ENCODE measurements at regions of chr6 and their contacts with region 1.

Region 1: DNA sequence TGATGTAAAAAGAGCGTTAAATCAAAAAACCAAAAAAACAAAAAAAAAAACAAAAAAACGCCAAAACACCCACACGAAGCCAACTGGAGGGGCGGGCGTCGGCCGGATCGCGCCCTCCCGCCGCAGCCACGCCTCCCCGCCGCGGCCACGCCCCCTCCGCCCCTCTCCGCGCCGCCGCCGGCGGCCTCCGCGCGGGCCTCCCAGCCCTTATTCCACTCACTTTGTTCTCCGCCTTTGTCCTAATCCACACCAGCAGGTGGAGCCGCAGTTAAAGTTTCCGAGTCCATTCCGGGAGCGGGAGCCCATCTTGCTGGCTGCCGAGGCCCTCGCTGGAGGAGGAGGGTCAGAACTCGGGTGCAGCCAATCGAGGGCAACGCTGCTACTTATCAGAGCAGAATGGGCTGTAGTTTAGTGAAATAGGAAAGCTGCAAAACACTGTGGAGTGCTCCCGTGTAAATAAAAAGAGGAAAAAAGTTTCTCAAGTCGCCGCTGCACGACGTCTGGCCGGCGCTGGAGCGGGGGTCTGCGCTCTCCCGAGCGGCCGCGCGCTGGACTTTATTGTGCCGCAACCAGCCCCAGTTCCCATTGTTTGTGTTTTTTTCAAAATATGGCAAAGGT is at the start of gene ASF1A:
- DNase-seq: peak; percentile 92 to 99 (median 95)
- ATAC-seq: peak; percentile 76
- H3K4me3 ChIP-seq: peak within 1 kb of the TSS; percentile 94
- H3K4me3 Mint-ChIP-seq: peak within 1 kb of the TSS; percentile 99
- H3K27ac ChIP-seq: peak within 1 kb of the TSS; percentile 91 to 93
- H3K27ac Mint-ChIP-seq: peak within 1 kb of the TSS; percentile 98
- H3K4me1 ChIP-seq: peaks cover 36% of the 10 kb centered on the region
- H3K4me1 Mint-ChIP-seq: peaks cover 80% of the 10 kb centered on the region
- H3K27me3 ChIP-seq: no peaks in the 10 kb centered on the region
- H3K27me3 Mint-ChIP-seq: no peaks in the 10 kb centered on the region
- CTCF ChIP-seq: peak; percentile 17
- total RNA-seq, gene ASF1A: 10.7 to 11.9 TPM

Region 2: GRCh38 chr6:118283766-118284165 is 610.1 kb before region 1 on chr6:
- CTCF ChIA-PET with region 1: no interaction called
- POLR2A ChIA-PET with region 1: no interaction called
- intact Hi-C with region 1: loop called in 1 of 2 experiments (anchors 5 kb)
- DNase-seq: peak in 13 of 14 experiments; percentile 9 to 74 (median 38)
- ATAC-seq: peak; percentile 59
- H3K4me3 ChIP-seq: no peak overlapping the region
- H3K4me3 Mint-ChIP-seq: no peak overlapping the region
- H3K27ac ChIP-seq: no peak overlapping the region
- H3K27ac Mint-ChIP-seq: no peak overlapping the region
- H3K4me1 ChIP-seq: no peaks in the 10 kb centered on the region
- H3K4me1 Mint-ChIP-seq: no peaks in the 10 kb centered on the region
- H3K27me3 ChIP-seq: no peaks in the 10 kb centered on the region
- H3K27me3 Mint-ChIP-seq: peaks cover 11% of the 10 kb centered on the region
- CTCF ChIP-seq: peak; percentile 67

Region 3: GRCh38 chr6:118651282-118652050 is 242.4 kb before region 1 on chr6 and contains the start of gene CEP85L:
- CTCF ChIA-PET with region 1: no interaction called
- POLR2A ChIA-PET with region 1: interaction called, 4 read pairs
- intact Hi-C with region 1: loop called (anchors 5 to 10 kb)
- DNase-seq: peak; percentile 83 to 96 (median 90)
- ATAC-seq: peak; percentile 90
- H3K4me3 ChIP-seq: peak within 1 kb of the TSS; percentile 82
- H3K4me3 Mint-ChIP-seq: peak within 1 kb of the TSS; percentile 91
- H3K27ac ChIP-seq: peak within 1 kb of the TSS; percentile 78 to 87
- H3K27ac Mint-ChIP-seq: peak within 1 kb of the TSS; percentile 91
- H3K4me1 ChIP-seq: peaks cover 35% of the 10 kb centered on the region
- H3K4me1 Mint-ChIP-seq: peaks cover 59% of the 10 kb centered on the region
- H3K27me3 ChIP-seq: no peaks in the 10 kb centered on the region
- H3K27me3 Mint-ChIP-seq: no peaks in the 10 kb centered on the region
- CTCF ChIP-seq: no peak
- total RNA-seq, gene CEP85L: 76.2 to 80.7 TPM

Region 4: GRCh38 chr6:118810420-118811027 is 83.4 kb before region 1 on chr6:
- CTCF ChIA-PET with region 1: no interaction called
- POLR2A ChIA-PET with region 1: interaction called, 55 read pairs
- intact Hi-C with region 1: loop called (anchors 5 kb)
- DNase-seq: peak; percentile 25 to 95 (median 56)
- ATAC-seq: peak; percentile 98
- H3K4me3 ChIP-seq: peak overlapping the region; percentile 15
- H3K4me3 Mint-ChIP-seq: peak overlapping the region; percentile 81
- H3K27ac ChIP-seq: peak overlapping the region in 1 of 2 donors; percentile 62
- H3K27ac Mint-ChIP-seq: peak overlapping the region; percentile 87
- H3K4me1 ChIP-seq: peaks cover 22% of the 10 kb centered on the region
- H3K4me1 Mint-ChIP-seq: peaks cover 61% of the 10 kb centered on the region
- H3K27me3 ChIP-seq: no peaks in the 10 kb centered on the region
- H3K27me3 Mint-ChIP-seq: no peaks in the 10 kb centered on the region
- CTCF ChIP-seq: no peak

Region 5: DNA sequence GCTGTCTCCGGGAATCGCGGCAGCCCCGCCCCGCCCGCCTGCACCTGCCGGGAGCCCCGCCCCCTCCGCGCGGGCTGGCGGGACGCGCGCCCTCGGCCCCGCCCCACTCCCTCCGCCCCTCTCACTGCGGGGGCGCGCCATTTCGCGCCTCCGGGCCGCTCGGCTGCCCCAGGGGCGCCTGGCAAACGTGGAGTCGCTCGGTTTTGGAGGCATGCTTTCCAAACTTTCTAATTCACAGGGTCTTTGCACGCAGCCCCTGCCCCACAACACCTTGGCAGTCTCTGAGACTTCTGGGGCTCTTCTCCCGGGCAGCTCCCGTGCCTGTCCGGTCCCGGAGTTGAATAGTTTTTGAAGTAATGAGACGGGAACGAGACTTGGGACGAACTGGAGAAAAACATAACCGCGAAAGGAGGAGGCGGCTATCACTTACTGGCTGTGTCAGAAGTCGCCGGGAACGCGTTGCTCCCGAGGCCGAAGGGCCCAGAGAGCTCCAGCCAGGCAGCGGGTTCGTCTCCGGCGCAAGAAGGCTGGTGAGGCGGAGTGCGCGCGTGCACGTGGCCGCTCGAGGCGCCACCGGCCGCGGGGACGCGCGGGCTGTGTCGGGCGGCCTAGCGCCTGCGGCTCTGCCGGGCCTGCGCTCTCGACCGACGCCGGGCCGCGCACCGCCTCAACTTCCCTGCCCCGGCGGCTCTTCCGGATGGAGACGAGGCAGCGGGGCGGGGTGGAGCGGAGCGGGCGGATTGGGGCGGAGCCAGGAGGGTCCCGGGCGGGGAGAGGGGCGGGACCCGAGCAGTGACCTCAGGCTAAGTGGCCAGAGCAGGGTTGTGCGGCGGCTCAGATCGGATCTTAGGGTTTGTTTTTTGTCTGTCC is 40.8 kb after region 1 on chr6 and contains the start of gene MCM9:
- CTCF ChIA-PET with region 1: interaction called, 9 read pairs
- POLR2A ChIA-PET with region 1: interaction called, 55 read pairs
- intact Hi-C with region 1: loop called (anchors 2 kb)
- DNase-seq: peak; percentile 71 to 96 (median 84)
- ATAC-seq: peak; percentile 88
- H3K4me3 ChIP-seq: peak within 1 kb of the TSS; percentile 92
- H3K4me3 Mint-ChIP-seq: peak within 1 kb of the TSS; percentile 91
- H3K27ac ChIP-seq: peak within 1 kb of the TSS; percentile 79 to 88
- H3K27ac Mint-ChIP-seq: peak within 1 kb of the TSS; percentile 88
- H3K4me1 ChIP-seq: peaks cover 19% of the 10 kb centered on the region
- H3K4me1 Mint-ChIP-seq: peaks cover 53% of the 10 kb centered on the region
- H3K27me3 ChIP-seq: no peaks in the 10 kb centered on the region
- H3K27me3 Mint-ChIP-seq: no peaks in the 10 kb centered on the region
- CTCF ChIP-seq: no peak
- total RNA-seq, gene MCM9: 25.5 TPM

Region 6: GRCh38 chr6:119110601-119111548 is 217.0 kb after region 1 on chr6:
- CTCF ChIA-PET with region 1: interaction called, 3 read pairs
- POLR2A ChIA-PET with region 1: interaction called, 14 read pairs
- intact Hi-C with region 1: loop called in 1 of 2 experiments (anchors 2 kb)
- DNase-seq: peak in 11 of 14 experiments; percentile 6 to 82 (median 26)
- ATAC-seq: peak; percentile 91
- H3K4me3 ChIP-seq: no peak overlapping the region
- H3K4me3 Mint-ChIP-seq: peak overlapping the region; percentile 30
- H3K27ac ChIP-seq: no peak overlapping the region
- H3K27ac Mint-ChIP-seq: no peak overlapping the region
- H3K4me1 ChIP-seq: peaks cover 9% of the 10 kb centered on the region
- H3K4me1 Mint-ChIP-seq: peaks cover 13% of the 10 kb centered on the region
- H3K27me3 ChIP-seq: no peaks in the 10 kb centered on the region
- H3K27me3 Mint-ChIP-seq: no peaks in the 10 kb centered on the region
- CTCF ChIP-seq: peak; percentile 72